Activated naive CD4-positive, alpha-beta T cell treated with anti-CD3 and anti-CD28 coated beads for 36 hours (primary cell): ENCODE measurements at regions of chr3 and their contacts with region 1.

Region 1: GRCh38 chr3:115814778-115815380 is 191.6 kb downstream of the GAP43 start:
- DNase-seq: peak; percentile 82
- H3K4me3 Mint-ChIP-seq: no peak overlapping the region
- H3K27ac Mint-ChIP-seq: no peak overlapping the region
- H3K4me1 Mint-ChIP-seq: no peaks in the 10 kb centered on the region
- H3K27me3 Mint-ChIP-seq: no peaks in the 10 kb centered on the region

Region 2: DNA sequence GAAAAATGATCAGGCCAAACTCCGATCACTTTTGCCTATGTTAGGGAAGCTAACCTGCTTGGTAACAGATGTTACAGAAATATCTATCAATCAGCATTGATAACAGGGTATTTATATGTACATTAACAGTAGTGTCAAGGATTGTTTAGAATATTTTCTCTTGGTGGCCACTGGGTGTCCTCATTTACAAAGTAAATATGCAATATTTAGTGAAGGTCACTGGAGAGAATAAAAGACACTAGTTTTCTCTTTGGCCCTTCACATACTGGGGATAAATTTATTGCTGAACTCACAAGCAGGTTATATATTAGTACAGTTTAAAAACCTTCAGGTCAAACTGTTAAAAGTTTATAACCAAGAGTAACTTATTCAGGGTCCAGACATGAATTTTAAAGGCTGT is 1452.1 kb before region 1 on chr3:
- CTCF ChIA-PET with region 1: interaction called, 3 read pairs
- intact Hi-C with region 1: loop called (anchors 1 kb)
- DNase-seq: no peak
- H3K4me3 Mint-ChIP-seq: no peak overlapping the region
- H3K27ac Mint-ChIP-seq: no peak overlapping the region
- H3K4me1 Mint-ChIP-seq: peaks cover 2% of the 10 kb centered on the region
- H3K27me3 Mint-ChIP-seq: no peaks in the 10 kb centered on the region

Region 3: GRCh38 chr3:115217678-115218451 is 597.0 kb before region 1 on chr3:
- CTCF ChIA-PET with region 1: interaction called, 4 read pairs
- intact Hi-C with region 1: loop called (anchors 1 kb)
- DNase-seq: peak; percentile 23
- H3K4me3 Mint-ChIP-seq: no peak overlapping the region
- H3K27ac Mint-ChIP-seq: no peak overlapping the region
- H3K4me1 Mint-ChIP-seq: no peaks in the 10 kb centered on the region
- H3K27me3 Mint-ChIP-seq: no peaks in the 10 kb centered on the region

Region 4: DNA sequence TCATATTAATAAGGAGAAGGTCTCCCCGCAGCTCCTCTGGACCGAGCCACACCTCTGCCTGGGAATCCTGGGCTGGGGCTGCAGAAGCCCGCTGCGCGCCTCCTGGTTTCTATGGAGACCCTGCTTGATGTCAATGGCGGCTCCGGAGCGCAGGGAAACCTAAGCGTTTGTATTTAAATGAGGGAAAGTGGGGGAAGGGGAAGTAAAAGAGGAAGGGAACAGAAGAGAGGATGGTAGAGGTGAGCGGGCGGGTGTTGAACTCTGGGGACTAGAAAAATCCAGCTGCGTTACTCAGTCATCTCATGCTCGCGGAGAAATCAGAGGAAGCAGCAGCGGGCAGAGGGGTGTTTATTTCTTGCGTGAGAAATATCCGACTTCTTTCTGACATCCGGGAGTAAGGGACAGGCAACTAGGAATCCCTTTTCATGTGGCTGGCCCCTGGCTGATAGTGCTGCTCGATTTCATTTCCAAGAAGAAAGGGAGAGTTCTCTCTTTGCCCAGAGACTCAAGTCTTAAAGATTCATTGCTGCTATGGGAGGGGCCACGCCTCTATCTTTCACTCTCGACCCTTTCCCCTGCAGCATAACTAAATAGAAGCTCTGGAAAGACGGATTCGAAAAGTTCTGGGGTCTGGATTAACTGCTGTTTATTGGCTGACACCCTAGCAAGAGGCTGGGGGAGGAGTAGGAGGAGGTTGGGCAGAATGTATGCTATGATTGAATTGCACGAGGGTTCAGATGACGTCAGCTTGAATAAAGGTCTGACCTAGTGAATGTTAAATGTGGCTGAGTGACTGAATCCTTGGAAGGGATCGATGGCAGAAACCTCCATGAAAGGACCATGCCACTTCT is 302.1 kb before region 1 on chr3:
- CTCF ChIA-PET with region 1: no interaction called
- intact Hi-C with region 1: no loop called
- DNase-seq: peak; percentile 50
- H3K4me3 Mint-ChIP-seq: peak overlapping the region; percentile 83
- H3K27ac Mint-ChIP-seq: no peak overlapping the region
- H3K4me1 Mint-ChIP-seq: peaks cover 20% of the 10 kb centered on the region
- H3K27me3 Mint-ChIP-seq: peaks cover 33% of the 10 kb centered on the region

Region 5: DNA sequence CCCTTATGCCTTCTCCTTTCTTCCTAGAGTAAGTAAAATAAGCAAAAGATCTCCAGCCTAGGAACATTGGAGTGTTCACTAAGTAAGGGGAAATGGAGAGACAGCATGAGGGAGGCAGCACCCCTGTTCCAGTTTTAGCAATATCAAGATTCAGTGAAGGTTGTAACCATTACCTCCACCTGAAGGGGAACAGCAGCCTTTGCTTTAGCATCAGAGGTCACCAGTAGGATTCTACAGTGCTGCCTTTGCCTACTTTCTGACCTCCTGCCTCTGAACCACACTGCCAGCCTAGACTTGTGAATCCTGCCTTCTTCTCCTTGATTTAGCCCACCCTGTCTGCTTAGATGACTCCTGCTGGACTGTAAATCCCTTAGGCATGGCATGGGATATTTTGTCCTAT is 86.9 kb before region 1 on chr3:
- CTCF ChIA-PET with region 1: no interaction called
- intact Hi-C with region 1: no loop called
- DNase-seq: no peak
- H3K4me3 Mint-ChIP-seq: no peak overlapping the region
- H3K27ac Mint-ChIP-seq: no peak overlapping the region
- H3K4me1 Mint-ChIP-seq: no peaks in the 10 kb centered on the region
- H3K27me3 Mint-ChIP-seq: peaks cover 3% of the 10 kb centered on the region

Region 6: DNA sequence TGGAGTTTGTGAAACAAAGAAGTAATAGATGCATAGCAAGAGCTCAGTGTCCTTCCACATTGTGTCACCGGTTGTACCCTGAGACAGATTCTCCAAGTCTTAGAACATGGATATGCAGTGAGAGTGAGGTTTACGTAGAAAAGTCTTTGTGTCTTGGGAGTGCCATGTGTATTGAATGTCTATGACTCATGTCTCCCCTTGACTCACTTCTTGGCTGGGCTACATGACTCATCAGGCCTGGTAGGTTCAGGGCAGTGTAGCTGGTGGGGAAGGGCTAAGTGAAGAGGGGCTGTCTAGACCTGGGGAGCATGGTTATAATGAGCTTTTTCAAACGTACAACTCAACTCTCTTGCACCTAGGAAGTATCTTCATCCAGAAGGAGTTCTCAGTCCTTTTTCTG is 24.1 kb before region 1 on chr3:
- CTCF ChIA-PET with region 1: interaction called, 18 read pairs
- intact Hi-C with region 1: no loop called
- DNase-seq: peak; percentile 72
- H3K4me3 Mint-ChIP-seq: no peak overlapping the region
- H3K27ac Mint-ChIP-seq: no peak overlapping the region
- H3K4me1 Mint-ChIP-seq: peaks cover 36% of the 10 kb centered on the region
- H3K27me3 Mint-ChIP-seq: no peaks in the 10 kb centered on the region

Region 7: GRCh38 chr3:115885621-115886020 is 70.7 kb after region 1 on chr3:
- CTCF ChIA-PET with region 1: no interaction called
- intact Hi-C with region 1: no loop called
- DNase-seq: no peak
- H3K4me3 Mint-ChIP-seq: no peak overlapping the region
- H3K27ac Mint-ChIP-seq: no peak overlapping the region
- H3K4me1 Mint-ChIP-seq: no peaks in the 10 kb centered on the region
- H3K27me3 Mint-ChIP-seq: peaks cover 9% of the 10 kb centered on the region

Region 8: DNA sequence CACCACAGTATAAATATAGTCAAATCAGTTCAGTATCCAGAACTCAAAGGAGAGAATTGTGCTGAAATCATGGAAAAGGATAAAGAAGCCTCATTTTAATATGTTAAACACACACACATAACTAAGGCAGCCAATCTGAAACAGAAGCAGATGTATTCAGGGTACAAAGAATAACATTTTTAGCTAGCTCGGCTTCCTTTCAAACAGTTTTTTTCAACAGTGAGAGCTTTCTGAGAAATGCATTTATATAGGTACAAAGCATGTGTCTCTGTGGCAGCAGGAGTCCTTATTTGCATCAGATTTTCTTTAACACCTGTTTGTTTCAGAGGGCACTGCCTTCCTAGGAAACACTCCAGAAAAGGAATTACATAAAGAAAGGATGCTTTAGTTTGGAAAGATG is 84.1 kb after region 1 on chr3:
- CTCF ChIA-PET with region 1: no interaction called
- intact Hi-C with region 1: no loop called
- DNase-seq: no peak
- H3K4me3 Mint-ChIP-seq: no peak overlapping the region
- H3K27ac Mint-ChIP-seq: no peak overlapping the region
- H3K4me1 Mint-ChIP-seq: no peaks in the 10 kb centered on the region
- H3K27me3 Mint-ChIP-seq: peaks cover 18% of the 10 kb centered on the region